Activated CD8-positive, alpha-beta memory T cell treated with anti-CD3 and anti-CD28 coated beads, Interleukin-2, amount 10 ng/mL, durations not matched to agents 7 days and 5 days (primary cell): ENCODE measurements at regions of chr12 and their contacts with region 1.

Region 1: DNA sequence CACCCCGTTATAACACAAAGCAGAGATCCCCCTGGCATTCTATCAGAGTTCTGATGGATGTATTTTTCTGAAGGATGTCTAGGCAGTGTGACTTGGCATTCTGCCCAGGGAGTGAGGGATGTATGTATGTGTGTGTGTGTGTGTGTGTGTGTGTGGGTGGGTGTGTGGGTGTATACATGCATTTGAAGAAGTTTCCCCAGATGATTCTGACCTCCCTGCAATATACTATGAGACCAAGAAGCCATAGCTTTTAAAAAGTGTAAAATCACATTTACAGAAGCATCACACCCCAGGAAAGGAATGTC is 59.7 kb upstream of the NAP1L1 start:
- DNase-seq: no peak
- ATAC-seq: peak; percentile 30
- H3K4me3 Mint-ChIP-seq: no peak overlapping the region
- H3K27ac Mint-ChIP-seq: no peak overlapping the region
- H3K4me1 Mint-ChIP-seq: peaks cover 19% of the 10 kb centered on the region
- H3K27me3 Mint-ChIP-seq: peaks cover under 1% of the 10 kb centered on the region

Region 2: DNA sequence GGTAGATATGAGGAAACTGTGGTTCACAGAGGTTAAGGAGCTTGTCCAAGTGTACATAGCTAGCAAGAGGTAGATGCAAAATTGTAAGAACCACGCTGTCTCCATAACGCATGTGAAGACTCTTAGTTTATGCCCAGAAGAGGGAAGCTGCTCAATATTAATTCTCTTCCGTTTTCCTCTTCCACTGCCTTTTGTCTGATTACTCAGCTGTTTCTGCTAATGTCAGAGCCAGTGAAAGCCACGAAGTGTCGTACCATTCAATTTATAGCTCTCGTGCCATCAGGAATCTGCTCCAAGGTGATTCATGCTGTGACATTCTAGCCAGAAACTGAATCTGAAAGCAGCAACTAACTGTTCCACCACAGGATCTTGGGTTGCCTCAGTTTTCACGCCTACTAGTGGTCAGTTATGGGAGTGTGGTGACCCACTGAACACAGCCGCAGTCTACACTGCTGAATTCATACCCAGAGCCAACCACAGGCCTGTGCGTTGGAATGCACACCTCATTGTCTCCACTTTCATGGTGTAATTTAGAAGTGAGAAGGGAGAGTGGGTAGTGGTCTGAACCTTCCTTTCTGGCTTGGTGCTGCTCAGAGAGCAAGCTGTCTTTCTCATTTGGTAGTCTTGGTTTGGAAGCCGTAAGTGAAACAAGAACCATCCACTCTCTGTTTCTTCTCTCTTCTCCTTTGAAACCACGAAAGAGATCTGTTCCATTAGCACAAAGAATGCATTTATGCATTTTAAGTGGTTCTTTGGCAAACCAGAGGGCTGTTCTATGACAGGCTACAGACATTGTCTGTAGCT is 14.5 kb after region 1 on chr12:
- CTCF ChIA-PET with region 1: interaction called, 11 read pairs
- DNase-seq: peak; percentile 93
- ATAC-seq: peak; percentile 95
- H3K4me3 Mint-ChIP-seq: peak overlapping the region; percentile 56
- H3K27ac Mint-ChIP-seq: peak overlapping the region; percentile 77
- H3K4me1 Mint-ChIP-seq: peaks cover 19% of the 10 kb centered on the region
- H3K27me3 Mint-ChIP-seq: peaks cover 2% of the 10 kb centered on the region

Region 3: DNA sequence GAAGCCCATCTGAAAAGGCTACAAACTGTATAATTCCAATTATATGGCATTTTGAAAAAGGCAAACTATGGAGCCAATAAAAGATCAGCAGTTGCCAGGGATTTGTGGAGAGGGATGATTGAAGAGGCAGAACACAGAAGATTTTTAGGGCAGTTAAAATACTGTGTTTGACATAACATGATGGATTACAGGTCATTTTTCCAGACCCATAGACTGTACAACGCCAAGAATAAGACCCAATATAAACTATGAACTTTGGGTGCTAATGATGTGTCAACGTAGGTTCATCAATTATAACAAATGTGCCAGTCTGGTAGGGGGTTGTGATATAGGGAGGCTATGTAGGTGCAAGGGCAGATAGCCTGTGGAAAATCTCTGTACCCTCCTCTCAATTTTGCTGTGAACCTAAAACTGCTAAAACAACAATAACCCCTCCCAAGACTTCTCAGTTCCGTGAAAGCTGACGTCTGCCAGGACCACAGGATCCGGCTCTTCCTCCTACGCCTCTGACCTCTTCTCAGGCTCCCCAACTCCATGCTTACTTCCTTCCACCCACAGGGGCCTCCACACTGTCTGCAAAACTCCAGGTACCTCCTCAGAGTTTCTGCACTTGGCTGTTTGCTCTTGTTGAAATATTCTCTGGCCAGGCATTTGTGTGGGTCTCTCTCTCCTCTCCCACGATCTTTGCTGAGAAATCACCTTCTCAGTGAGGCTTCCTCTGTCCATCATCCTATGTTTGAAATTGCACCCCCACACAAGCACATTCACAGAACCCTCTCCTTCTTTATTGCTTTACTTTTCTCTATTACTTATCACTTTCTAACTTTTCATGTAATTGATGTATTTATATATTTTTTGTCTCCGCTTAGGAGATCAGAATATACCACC is 72.6 kb after region 1 on chr12:
- CTCF ChIA-PET with region 1: no interaction called
- DNase-seq: no peak
- ATAC-seq: no peak
- H3K4me3 Mint-ChIP-seq: no peak overlapping the region
- H3K27ac Mint-ChIP-seq: no peak overlapping the region
- H3K4me1 Mint-ChIP-seq: peaks cover 2% of the 10 kb centered on the region
- H3K27me3 Mint-ChIP-seq: peaks cover 20% of the 10 kb centered on the region